Endothelial cell of umbilical vein (primary cell): ENCODE measurements at regions of chr4 and their contacts with region 1.

Region 1: GRCh38 chr4:20544645-20545044 is 155.6 kb upstream of the PACRGL start:
- DNase-seq: peak; percentile 74
- H3K4me3 ChIP-seq: no peak overlapping the region
- H3K27ac ChIP-seq: no peak overlapping the region
- H3K4me1 ChIP-seq: no peaks in the 10 kb centered on the region
- H3K27me3 ChIP-seq: no peaks in the 10 kb centered on the region
- CTCF ChIP-seq: peak; percentile 23 to 38
- POLR2A ChIP-seq: no peak

Region 2: DNA sequence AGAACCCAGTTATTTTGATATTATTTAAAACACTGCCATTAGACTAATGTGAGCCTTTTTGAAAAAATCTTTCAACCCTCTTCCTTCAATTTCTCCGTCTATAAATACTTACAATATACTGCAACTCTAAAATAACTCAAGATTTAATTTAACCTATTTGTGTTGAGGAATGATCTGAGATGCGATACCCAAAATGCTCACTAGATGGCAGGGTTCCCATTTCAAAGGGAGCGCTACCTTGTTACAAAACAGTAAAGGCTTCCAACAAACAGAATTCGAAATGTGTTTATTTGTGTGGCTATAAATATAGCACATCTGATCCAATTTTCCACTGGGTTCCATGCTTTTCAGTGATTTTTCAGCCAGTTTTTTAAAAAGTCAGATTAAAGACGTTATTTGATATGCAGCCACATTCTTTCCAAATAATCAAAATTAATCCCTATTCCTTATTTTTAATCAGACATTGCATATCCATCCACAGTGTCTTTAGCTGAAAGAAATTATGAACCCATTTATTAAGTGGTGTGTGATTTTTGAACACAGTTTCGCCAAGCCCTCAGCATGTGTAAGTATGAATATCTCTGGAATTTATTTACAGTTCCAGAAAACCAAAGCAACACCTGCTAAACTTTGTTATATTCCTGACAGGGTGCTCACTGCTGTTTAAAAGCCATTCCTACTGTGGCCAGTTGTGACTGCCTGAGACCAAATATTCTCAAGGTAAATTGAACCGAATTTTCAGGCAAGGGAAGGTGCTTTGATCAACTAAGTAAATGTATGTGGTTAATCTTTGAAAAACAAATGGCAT is 1855.1 kb before region 1 on chr4:
- CTCF ChIA-PET with region 1: no interaction called
- POLR2A ChIA-PET with region 1: no interaction called
- dilution Hi-C with region 1: no loop called
- intact Hi-C with region 1: loop called (anchors 1 kb)
- DNase-seq: peak; percentile 77
- H3K4me3 ChIP-seq: no peak overlapping the region
- H3K27ac ChIP-seq: no peak overlapping the region
- H3K4me1 ChIP-seq: peaks cover 2% of the 10 kb centered on the region
- H3K27me3 ChIP-seq: no peaks in the 10 kb centered on the region
- CTCF ChIP-seq: peak; percentile 57 to 68
- POLR2A ChIP-seq: no peak

Region 3: DNA sequence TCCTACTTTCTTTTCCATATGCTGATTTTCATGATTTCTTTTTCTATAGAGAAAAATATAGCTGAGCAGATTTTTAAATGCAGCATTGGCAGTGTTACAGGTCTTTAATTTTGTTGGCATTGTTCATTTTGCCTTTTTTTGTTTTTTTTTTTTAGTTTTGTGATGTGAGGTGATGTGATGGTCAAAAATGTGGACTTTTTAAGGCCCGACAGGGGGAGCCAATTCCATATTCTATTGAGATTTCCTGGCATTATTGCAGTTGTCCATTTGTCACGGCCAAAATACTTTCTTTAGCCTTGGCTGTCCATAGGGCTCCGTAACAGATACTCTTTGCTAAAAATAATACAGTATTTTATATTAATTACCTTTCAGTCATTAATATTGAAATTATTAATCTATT is 245.1 kb before region 1 on chr4:
- CTCF ChIA-PET with region 1: interaction called, 4 read pairs
- POLR2A ChIA-PET with region 1: no interaction called
- dilution Hi-C with region 1: no loop called
- intact Hi-C with region 1: loop called (anchors 5 kb)
- DNase-seq: peak; percentile 58
- H3K4me3 ChIP-seq: no peak overlapping the region
- H3K27ac ChIP-seq: no peak overlapping the region
- H3K4me1 ChIP-seq: no peaks in the 10 kb centered on the region
- H3K27me3 ChIP-seq: no peaks in the 10 kb centered on the region
- CTCF ChIP-seq: peak; percentile 40 to 48
- POLR2A ChIP-seq: no peak

Region 4: DNA sequence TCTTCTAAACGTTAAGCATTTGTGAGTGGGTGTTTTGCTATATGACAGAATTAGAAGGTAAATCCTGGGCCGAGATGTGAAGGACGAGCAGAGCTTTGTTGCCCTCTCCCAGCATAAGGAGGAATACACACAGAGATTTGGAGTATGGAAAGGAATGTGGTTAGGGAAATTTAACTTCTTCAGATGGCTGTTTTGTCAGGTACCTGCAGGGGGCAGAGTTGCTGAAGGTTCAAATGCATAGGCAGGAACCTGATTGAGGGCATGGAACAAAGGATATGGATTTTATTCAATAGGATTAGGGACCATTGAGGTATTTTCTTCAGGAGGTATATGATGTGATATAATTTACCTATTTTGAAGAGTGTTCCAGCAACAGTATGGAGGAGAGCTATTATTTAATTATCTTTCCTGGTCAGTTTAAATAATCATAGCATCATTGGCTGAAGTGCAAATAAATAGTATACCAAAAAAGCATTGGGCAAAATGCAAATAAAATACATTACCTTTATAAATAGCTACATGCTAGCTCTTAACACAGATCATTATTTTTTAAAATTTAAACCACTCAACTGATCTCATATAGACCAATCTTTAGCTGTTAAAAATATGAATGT is 149.4 kb before region 1 on chr4:
- CTCF ChIA-PET with region 1: interaction called, 6 read pairs
- POLR2A ChIA-PET with region 1: no interaction called
- dilution Hi-C with region 1: no loop called
- intact Hi-C with region 1: loop called (anchors 1 kb)
- DNase-seq: peak; percentile 45
- H3K4me3 ChIP-seq: no peak overlapping the region
- H3K27ac ChIP-seq: no peak overlapping the region
- H3K4me1 ChIP-seq: no peaks in the 10 kb centered on the region
- H3K27me3 ChIP-seq: no peaks in the 10 kb centered on the region
- CTCF ChIP-seq: peak; percentile 56 to 62
- POLR2A ChIP-seq: no peak

Region 5: GRCh38 chr4:20428436-20429160 is 116.0 kb before region 1 on chr4:
- CTCF ChIA-PET with region 1: interaction called, 15 read pairs
- POLR2A ChIA-PET with region 1: no interaction called
- dilution Hi-C with region 1: no loop called
- intact Hi-C with region 1: loop called (anchors 1 kb)
- DNase-seq: no peak
- H3K4me3 ChIP-seq: no peak overlapping the region
- H3K27ac ChIP-seq: peak overlapping the region; percentile 8
- H3K4me1 ChIP-seq: peaks cover 20% of the 10 kb centered on the region
- H3K27me3 ChIP-seq: no peaks in the 10 kb centered on the region
- CTCF ChIP-seq: no peak
- POLR2A ChIP-seq: no peak